Esophagus muscularis mucosa (tissue), 4 donors: ENCODE measurements at regions of chr2 and their contacts with region 1.

Region 1: DNA sequence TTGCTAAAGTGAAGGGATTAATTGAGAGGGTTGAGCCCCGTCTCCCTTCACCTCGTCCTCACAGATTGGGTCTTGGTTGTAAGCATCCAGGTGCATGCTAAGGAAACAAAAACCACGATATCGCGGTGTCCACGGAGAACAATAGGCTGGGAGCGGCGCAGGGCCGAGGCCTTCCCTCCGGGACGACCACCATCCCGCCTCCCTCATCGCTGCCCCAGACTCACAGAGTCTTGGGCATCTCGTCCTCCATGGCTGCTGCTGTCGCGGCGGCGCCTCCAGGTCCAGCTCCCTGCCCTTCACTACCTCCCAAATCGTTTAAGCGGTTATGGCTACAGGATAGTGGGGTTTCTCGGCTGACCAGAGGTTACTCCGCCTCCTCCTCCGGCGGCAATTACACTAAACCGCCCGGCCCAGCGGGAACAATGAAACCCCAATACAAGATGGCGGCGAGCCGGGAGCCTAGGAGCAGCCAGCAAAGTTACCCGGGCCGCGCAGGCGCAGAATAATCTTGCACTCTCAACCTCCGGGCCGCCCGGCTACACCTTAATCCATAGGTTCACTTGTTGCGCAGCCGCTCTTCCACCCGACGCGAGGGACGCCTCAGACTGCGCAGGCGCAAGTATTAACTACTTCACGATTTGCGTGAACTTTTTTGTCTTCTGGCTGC is at the start of gene TIA1:
- DNase-seq: peak; percentile 99
- H3K4me3 ChIP-seq: peak within 1 kb of the TSS; percentile 73 to 89 (median 79)
- H3K27ac ChIP-seq: peak within 1 kb of the TSS; percentile 90 to 96 (median 92)
- H3K4me1 ChIP-seq: peaks cover 22 to 45% (median 41%) of the 10 kb centered on the region in 4 donors
- H3K27me3 ChIP-seq: no peaks in the 10 kb centered on the region
- CTCF ChIP-seq: peak in 1 of 3 experiments; percentile 8
- EP300 ChIP-seq: no peak
- POLR2A ChIP-seq: no peak
- total RNA-seq, gene TIA1: 41.1 to 82.2 (median 47.3) TPM

Region 2: DNA sequence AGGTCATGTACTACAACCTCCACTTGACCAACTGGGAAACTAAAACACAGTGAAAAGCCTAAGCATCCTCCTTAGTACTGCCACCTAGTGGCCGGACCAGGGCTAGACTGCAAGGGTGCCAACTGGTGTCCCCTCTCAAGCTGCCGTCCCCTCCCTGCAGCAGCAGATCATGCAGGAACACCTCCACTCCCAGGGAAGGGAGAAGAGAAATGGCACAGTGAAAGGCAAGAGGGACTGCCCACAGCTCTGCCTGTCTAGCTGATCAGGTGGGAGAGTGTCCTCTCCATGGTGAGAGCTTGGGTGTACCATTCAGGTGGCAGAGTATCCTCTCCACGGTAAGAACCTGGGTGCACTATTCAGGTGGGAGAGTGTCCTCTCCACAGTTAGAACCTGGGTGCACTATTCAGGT is 682.9 kb before region 1 on chr2:
- intact Hi-C with region 1: no loop called
- DNase-seq: no peak
- H3K4me3 ChIP-seq: no peak overlapping the region
- H3K27ac ChIP-seq: no peak overlapping the region
- H3K4me1 ChIP-seq: peaks cover 7 to 35% (median 23%) of the 10 kb centered on the region in 4 donors
- H3K27me3 ChIP-seq: no peaks in the 10 kb centered on the region
- CTCF ChIP-seq: peak; percentile 35 to 78 (median 48)
- EP300 ChIP-seq: no peak
- POLR2A ChIP-seq: no peak

Region 3: DNA sequence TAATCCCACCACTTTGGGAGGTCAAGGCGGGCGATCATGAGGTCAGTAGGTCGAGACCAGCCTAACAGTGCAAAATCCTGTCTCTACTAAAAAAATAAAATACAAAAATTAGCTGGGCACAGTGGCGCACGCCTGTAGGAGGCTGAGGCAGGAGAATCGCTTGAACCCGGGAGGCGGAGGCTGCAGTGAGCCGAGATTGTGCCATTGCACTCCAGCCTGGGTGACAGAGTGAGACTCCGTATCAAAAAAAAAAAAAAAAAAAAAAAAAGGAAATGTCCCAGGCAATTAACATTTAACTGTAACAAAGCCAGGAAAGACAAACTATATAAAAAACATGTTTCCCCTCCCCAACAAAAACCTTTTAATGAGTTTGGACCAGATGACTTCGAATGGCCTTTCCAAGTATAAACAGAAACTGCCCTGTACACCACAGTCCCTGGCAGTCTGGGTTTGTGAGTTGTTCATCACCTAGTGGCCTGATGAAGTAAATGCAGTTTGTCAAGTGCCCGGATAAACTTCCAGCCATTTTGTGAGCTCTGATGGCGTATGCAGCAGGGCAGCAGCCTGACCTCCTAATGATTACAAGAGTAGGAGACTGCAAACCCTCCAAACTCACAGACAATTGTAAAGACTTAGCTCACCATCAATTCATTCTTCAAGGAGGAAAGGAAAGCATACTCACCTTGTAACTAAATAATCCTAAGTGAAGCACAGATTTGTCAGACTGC is 177.6 kb before region 1 on chr2:
- intact Hi-C with region 1: loop called (anchors 5 kb)
- DNase-seq: no peak
- H3K4me3 ChIP-seq: peak overlapping the region in 2 of 4 donors; percentile 11 to 26
- H3K27ac ChIP-seq: peak overlapping the region; percentile 56 to 80 (median 78)
- H3K4me1 ChIP-seq: peaks cover 6 to 36% (median 27%) of the 10 kb centered on the region in 4 donors
- H3K27me3 ChIP-seq: no peaks in the 10 kb centered on the region
- CTCF ChIP-seq: peak; percentile 76 to 92 (median 90)
- EP300 ChIP-seq: no peak
- POLR2A ChIP-seq: no peak

Region 4: DNA sequence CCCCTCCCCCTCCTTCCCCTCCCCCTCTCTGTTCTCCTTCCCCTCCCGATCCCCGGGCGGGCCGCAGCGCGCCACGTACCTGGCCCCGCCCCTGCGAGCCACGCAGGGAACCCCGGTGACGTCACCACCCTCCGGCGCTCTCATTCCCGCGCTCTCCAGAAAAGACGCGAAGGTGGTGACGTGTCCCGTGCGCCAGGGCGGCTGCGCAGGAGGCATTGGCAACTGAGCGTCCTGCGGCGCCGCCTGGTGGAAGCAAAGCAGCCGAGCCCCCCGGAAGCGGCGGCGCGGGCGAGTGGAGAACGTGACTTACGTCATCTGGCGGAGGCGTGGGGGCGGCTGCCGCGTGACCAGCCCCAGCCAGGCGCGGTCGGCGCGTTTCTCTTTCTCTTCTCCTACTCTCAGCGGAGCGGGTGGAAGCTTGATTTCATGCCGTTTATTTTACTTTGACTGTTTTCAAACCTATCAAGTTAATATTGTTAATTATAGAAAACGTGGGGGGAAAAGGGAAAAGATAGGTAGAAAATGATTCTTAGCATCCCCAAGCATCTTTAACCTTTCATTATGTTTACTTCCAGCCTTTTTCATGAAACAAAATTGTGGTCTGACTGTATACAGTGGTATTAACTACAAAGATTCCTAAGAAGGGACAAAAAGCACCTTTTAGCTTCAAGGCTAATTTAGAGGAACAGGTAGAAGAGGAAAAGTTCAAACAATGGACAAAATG is 105.6 kb before region 1 on chr2:
- intact Hi-C with region 1: no loop called
- DNase-seq: peak; percentile 100
- H3K4me3 ChIP-seq: peak overlapping the region; percentile 76 to 91 (median 78)
- H3K27ac ChIP-seq: peak overlapping the region; percentile 98 to 99 (median 99)
- H3K4me1 ChIP-seq: peaks cover 21 to 26% (median 23%) of the 10 kb centered on the region in 4 donors
- H3K27me3 ChIP-seq: no peaks in the 10 kb centered on the region
- CTCF ChIP-seq: peak; percentile 95 to 99 (median 98)
- EP300 ChIP-seq: no peak
- POLR2A ChIP-seq: peak; percentile 82

Region 5: DNA sequence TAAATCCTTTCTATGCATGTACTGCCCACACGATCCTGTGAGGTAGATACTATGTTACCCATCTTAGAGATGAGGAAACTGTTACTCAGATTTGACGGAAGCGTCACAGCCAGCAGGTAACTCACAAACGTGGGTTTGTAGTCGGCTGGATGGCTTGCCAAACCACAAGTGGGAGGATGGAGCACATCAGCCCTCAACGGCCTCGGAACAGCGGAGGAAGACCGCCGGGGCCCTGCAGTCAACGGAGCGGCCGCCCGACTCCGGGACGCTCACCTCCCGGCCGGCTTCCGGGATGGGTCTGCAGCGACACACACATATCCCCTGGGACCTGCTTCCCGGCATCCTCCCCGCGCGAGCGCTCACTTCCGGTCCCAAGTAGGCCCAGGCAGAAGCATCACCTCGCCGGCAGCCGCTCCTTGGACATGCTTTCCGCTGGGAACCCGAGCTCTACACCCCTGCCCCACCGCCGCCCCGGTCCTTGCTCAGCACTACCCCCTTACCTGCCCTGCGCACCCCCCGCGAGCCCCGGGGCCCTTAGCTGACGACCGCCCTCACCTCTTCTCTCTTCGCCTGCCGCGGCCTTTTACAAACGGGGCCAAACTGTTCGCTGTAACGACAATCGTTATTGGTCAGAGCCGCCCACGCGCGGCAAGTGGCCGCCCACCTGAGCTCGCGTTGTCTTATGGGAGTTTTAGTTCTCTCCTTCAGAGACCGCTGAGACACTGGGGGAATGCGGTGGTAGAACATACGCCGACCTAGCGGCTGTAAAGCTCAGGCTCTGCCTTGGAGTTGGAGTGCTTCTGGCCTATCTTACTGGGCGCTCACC is 57.7 kb before region 1 on chr2 and contains the start of gene C2orf42:
- intact Hi-C with region 1: loop called (anchors 5 kb)
- DNase-seq: peak; percentile 99
- H3K4me3 ChIP-seq: peak within 1 kb of the TSS; percentile 70 to 80 (median 76)
- H3K27ac ChIP-seq: peak within 1 kb of the TSS; percentile 95 to 98 (median 98)
- H3K4me1 ChIP-seq: peaks cover 8 to 16% (median 12%) of the 10 kb centered on the region in 4 donors
- H3K27me3 ChIP-seq: no peaks in the 10 kb centered on the region
- CTCF ChIP-seq: peak in 2 of 3 experiments; percentile 14 to 25
- EP300 ChIP-seq: no peak
- POLR2A ChIP-seq: peak; percentile 97
- total RNA-seq, gene C2orf42: 15.4 to 20.9 (median 17.9) TPM

Region 6: GRCh38 chr2:70607121-70607561 is 358.8 kb after region 1 on chr2:
- intact Hi-C with region 1: no loop called
- DNase-seq: no peak
- H3K4me3 ChIP-seq: no peak overlapping the region
- H3K27ac ChIP-seq: no peak overlapping the region
- H3K4me1 ChIP-seq: no peaks in the 10 kb centered on the region
- H3K27me3 ChIP-seq: peaks cover 0 to 27% (median 0%) of the 10 kb centered on the region in 4 donors
- CTCF ChIP-seq: no peak
- EP300 ChIP-seq: no peak
- POLR2A ChIP-seq: no peak